ENCODE measurements at regions of chr12 and their contacts with region 1.

Region 1: GRCh38 chr12:51217968-51218606 is at the start of gene POU6F1:
- DNase-seq: peak; percentile 68
- ATAC-seq: peak; percentile 79
- H3K4me3 Mint-ChIP-seq: peak within 1 kb of the TSS; percentile 91
- H3K27ac Mint-ChIP-seq: peak within 1 kb of the TSS; percentile 95
- H3K4me1 Mint-ChIP-seq: peaks cover 17% of the 10 kb centered on the region
- H3K27me3 Mint-ChIP-seq: no peaks in the 10 kb centered on the region
- CTCF ChIP-seq: no peak
- total RNA-seq, gene POU6F1: 20.3 and 26.2 TPM in 2 replicates

Region 2: GRCh38 chr12:50763639-50764285 is 454.3 kb before region 1 on chr12 and contains the start of gene ATF1:
- CTCF ChIA-PET with region 1: no interaction called
- POLR2A ChIA-PET with region 1: interaction called, 7 read pairs
- intact Hi-C with region 1: loop called (anchors 2 kb)
- DNase-seq: peak; percentile 89
- ATAC-seq: peak; percentile 80
- H3K4me3 Mint-ChIP-seq: peak within 1 kb of the TSS; percentile 95
- H3K27ac Mint-ChIP-seq: peak within 1 kb of the TSS; percentile 96
- H3K4me1 Mint-ChIP-seq: peaks cover 36% of the 10 kb centered on the region
- H3K27me3 Mint-ChIP-seq: no peaks in the 10 kb centered on the region
- CTCF ChIP-seq: no peak
- total RNA-seq, gene ATF1: 37.7 and 42.5 TPM in 2 replicates

Region 3: DNA sequence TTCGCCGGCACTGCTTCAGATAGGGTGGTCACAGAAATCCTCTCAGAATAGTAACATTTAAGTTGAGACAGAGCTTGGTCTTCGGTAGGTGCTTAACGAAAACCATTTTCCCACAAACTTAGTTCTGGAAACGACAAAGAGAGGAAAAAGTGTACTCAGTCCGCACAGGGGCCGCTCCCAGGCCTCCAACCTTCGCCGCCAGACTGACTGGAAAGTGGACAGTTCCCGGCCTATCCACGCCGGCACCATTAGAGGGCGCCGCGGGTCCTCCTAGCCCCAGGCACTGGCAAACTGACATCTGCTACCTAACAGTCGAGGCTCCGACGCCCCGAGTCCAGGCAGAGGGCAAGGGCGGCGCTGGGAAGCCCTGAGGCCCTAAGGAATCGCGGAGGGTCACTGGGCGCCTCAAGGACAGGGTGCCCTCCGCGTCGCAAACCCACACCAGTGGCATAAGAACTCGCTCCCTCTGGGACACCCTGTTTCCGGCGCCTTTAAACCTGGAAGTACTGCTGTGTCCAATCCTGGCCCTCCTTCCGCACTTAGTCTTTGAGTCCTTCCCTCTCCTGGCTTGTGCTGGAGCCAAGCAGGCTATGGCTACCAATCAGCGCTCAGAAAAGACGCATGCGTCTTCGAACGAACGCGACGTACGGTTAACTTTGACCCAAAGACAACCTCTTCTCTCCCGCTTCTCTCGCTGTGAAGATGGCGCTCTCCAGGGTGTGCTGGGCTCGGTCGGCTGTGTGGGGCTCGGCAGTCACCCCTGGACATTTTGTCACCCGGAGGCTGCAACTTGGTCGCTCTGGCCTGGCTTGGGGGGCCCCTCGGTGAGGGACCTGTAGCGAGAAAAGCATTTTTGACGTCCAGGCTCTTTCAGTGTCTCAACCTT is 170.2 kb before region 1 on chr12 and contains the start of gene LETMD1:
- CTCF ChIA-PET with region 1: no interaction called
- POLR2A ChIA-PET with region 1: interaction called, 5 read pairs
- intact Hi-C with region 1: loop called (anchors 1 kb)
- DNase-seq: peak; percentile 81
- ATAC-seq: peak; percentile 96
- H3K4me3 Mint-ChIP-seq: peak within 1 kb of the TSS; percentile 92
- H3K27ac Mint-ChIP-seq: peak within 1 kb of the TSS; percentile 87
- H3K4me1 Mint-ChIP-seq: peaks cover 30% of the 10 kb centered on the region
- H3K27me3 Mint-ChIP-seq: no peaks in the 10 kb centered on the region
- CTCF ChIP-seq: peak; percentile 64
- total RNA-seq, gene LETMD1: 82.8 and 92.0 TPM in 2 replicates

Region 4: DNA sequence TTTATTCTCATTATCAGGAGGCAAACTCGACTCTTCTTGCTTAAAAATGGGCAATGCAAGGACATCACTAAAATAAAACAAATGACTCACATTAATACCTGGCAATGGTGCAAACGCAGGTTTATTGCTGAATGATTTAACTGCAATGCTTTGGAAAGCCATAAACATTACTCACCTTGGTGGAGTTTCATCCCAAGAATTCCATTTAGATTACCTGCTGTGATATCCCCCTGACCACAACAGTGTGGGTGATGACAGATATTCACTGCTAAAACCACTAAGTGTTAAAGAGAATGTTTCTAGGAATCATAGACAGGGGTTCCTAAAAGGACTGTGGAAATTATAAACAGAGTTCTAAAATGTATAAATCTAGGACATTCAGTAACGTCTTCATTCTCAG is 99.4 kb before region 1 on chr12:
- CTCF ChIA-PET with region 1: no interaction called
- POLR2A ChIA-PET with region 1: no interaction called
- intact Hi-C with region 1: no loop called
- DNase-seq: no peak
- ATAC-seq: no peak
- H3K4me3 Mint-ChIP-seq: no peak overlapping the region
- H3K27ac Mint-ChIP-seq: no peak overlapping the region
- H3K4me1 Mint-ChIP-seq: no peaks in the 10 kb centered on the region
- H3K27me3 Mint-ChIP-seq: no peaks in the 10 kb centered on the region
- CTCF ChIP-seq: no peak

Region 5: GRCh38 chr12:51172515-51173431 is 45.3 kb before region 1 on chr12 and contains the start of gene TFCP2:
- CTCF ChIA-PET with region 1: interaction called, 8 read pairs
- POLR2A ChIA-PET with region 1: interaction called, 20 read pairs
- intact Hi-C with region 1: loop called (anchors 1 kb)
- DNase-seq: peak; percentile 84
- ATAC-seq: peak; percentile 98
- H3K4me3 Mint-ChIP-seq: peak within 1 kb of the TSS; percentile 77
- H3K27ac Mint-ChIP-seq: peak within 1 kb of the TSS; percentile 68
- H3K4me1 Mint-ChIP-seq: peaks cover 9% of the 10 kb centered on the region
- H3K27me3 Mint-ChIP-seq: no peaks in the 10 kb centered on the region
- CTCF ChIP-seq: no peak
- total RNA-seq, gene TFCP2: 34.9 and 36.7 TPM in 2 replicates

Region 6: DNA sequence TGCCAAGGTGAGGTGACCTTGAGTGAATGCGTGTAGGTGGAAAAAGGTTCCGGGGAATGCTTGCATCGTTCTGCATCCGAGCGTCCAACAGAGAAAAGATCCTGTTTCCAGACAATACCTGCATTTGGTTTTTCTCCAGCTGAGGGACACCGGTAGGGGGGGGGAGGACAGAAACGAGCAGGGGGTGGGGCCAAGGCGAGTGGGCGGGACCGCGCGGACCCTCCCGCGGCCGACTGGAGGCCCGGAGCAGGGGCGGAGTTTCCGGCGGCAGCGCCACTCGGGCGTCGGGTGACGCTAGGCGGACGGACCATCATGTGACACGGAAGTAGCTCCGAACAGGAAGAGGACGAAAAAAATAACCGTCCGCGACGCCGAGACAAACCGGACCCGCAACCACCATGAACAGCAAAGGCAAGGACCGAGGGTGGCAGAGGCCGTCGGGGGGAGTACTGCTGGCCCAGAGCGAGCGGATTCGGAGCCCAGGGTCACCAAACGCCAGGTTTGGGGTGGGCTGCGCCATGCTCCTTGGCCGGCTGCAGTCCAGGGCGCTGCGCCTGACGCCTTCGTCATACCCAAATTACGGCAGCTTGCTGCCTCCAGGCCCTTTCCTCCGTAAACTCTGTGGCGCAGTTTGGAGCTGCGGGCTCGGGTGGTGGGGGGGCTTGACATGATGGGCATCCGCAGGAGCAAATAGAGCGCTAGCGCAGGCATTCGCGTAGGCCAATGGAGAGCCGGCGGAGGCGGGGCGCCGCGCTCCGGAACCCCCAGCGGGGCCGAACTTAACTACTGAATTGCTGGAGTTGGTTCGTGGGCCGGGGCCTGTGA is 20.6 kb after region 1 on chr12 and contains the start of gene DAZAP2:
- CTCF ChIA-PET with region 1: interaction called, 8 read pairs
- POLR2A ChIA-PET with region 1: interaction called, 198 read pairs
- intact Hi-C with region 1: loop called (anchors 1 kb)
- DNase-seq: peak; percentile 89
- ATAC-seq: peak; percentile 91
- H3K4me3 Mint-ChIP-seq: peak within 1 kb of the TSS; percentile 98
- H3K27ac Mint-ChIP-seq: peak within 1 kb of the TSS; percentile 100
- H3K4me1 Mint-ChIP-seq: peaks cover 43% of the 10 kb centered on the region
- H3K27me3 Mint-ChIP-seq: no peaks in the 10 kb centered on the region
- CTCF ChIP-seq: no peak
- total RNA-seq, gene DAZAP2: 209 and 214 TPM in 2 replicates

Region 7: GRCh38 chr12:51270067-51270970 is 52.2 kb after region 1 on chr12 and contains the start of gene SMAGP:
- CTCF ChIA-PET with region 1: interaction called, 3 read pairs
- POLR2A ChIA-PET with region 1: interaction called, 4 read pairs
- intact Hi-C with region 1: loop called (anchors 1 kb)
- DNase-seq: peak; percentile 69
- ATAC-seq: peak; percentile 73
- H3K4me3 Mint-ChIP-seq: peak within 1 kb of the TSS; percentile 89
- H3K27ac Mint-ChIP-seq: peak within 1 kb of the TSS; percentile 80
- H3K4me1 Mint-ChIP-seq: peaks cover 26% of the 10 kb centered on the region
- H3K27me3 Mint-ChIP-seq: no peaks in the 10 kb centered on the region
- CTCF ChIP-seq: no peak
- total RNA-seq, gene SMAGP: 11.4 and 11.5 TPM in 2 replicates

Region 8: GRCh38 chr12:51391283-51392162 is 173.4 kb after region 1 on chr12 and contains the start of gene GALNT6:
- CTCF ChIA-PET with region 1: no interaction called
- POLR2A ChIA-PET with region 1: interaction called, 12 read pairs
- intact Hi-C with region 1: no loop called
- DNase-seq: peak; percentile 80
- ATAC-seq: peak; percentile 75
- H3K4me3 Mint-ChIP-seq: peak within 1 kb of the TSS; percentile 94
- H3K27ac Mint-ChIP-seq: peak within 1 kb of the TSS; percentile 85
- H3K4me1 Mint-ChIP-seq: peaks cover 79% of the 10 kb centered on the region
- H3K27me3 Mint-ChIP-seq: no peaks in the 10 kb centered on the region
- CTCF ChIP-seq: no peak
- total RNA-seq, gene GALNT6: 23.8 and 24.4 TPM in 2 replicates